ENCODE measurements at regions of chr5 and their contacts with region 1.

Region 1: GRCh38 chr5:368183-369084 is 46.9 kb downstream of the AHRR start:
- DNase-seq: peak; percentile 73
- ATAC-seq: peak; percentile 65
- H3K4me3 ChIP-seq: peak overlapping the region; percentile 7; the same call in 1 of the 2 replicates
- H3K27ac ChIP-seq: peak overlapping the region; percentile 98
- H3K4me1 ChIP-seq: peaks cover 63% of the 10 kb centered on the region
- H3K27me3 ChIP-seq: no peaks in the 10 kb centered on the region
- CTCF ChIP-seq: no peak
- EP300 ChIP-seq: peak; percentile 96 to 97
- POLR2A ChIP-seq: no peak; the same call in 1 of the 2 replicates
- RAD21 ChIP-seq: no peak; the same call in 1 of the 2 replicates

Region 2: DNA sequence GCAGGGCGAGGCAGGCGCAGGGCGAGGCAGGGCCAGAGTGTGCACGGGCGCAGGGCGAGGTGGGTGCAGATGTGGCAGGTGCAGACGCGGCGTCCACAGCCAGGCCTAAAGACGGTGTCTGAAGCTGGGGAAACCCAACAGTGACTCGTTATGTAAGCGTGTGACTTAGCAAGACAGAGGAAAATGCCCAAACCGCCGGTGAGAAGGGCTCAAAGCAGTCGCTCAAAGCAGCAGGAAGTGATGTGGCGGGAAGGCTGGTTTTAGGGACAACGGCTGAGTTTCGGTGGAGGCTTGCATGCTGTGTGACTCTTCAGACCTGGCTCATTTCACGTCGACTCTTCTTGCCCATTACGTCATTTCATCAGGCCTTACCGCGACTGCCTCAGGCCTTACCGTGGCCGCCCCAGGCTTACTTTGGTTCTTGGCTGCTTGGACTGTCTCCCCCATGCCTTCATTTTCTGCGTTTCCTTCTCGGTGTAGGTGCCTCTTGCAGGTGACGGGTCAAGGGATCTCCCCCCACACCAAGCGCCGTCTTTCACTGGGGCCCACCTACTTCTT is 24.1 kb after region 1 on chr5:
- CTCF ChIA-PET with region 1: no interaction called
- POLR2A ChIA-PET with region 1: interaction called, 9 read pairs
- RAD21 ChIA-PET with region 1: interaction called, 9 read pairs
- SMC1A ChIA-PET with region 1: interaction called, 10 read pairs
- in situ Hi-C with region 1: no loop called
- intact Hi-C with region 1: loop called (anchors 1 kb)
- DNase-seq: peak; percentile 95
- ATAC-seq: peak; percentile 95
- H3K4me3 ChIP-seq: peak overlapping the region; percentile 17; the same call in 1 of the 2 replicates
- H3K27ac ChIP-seq: peak overlapping the region; percentile 93
- H3K4me1 ChIP-seq: peaks cover 21% of the 10 kb centered on the region
- H3K27me3 ChIP-seq: no peaks in the 10 kb centered on the region
- CTCF ChIP-seq: no peak
- EP300 ChIP-seq: peak; percentile 81 to 82; a peak in 3 of 4 replicates
- POLR2A ChIP-seq: no peak; the same call in 1 of the 2 replicates
- RAD21 ChIP-seq: peak; percentile 4; the same call in 1 of the 2 replicates

Region 3: DNA sequence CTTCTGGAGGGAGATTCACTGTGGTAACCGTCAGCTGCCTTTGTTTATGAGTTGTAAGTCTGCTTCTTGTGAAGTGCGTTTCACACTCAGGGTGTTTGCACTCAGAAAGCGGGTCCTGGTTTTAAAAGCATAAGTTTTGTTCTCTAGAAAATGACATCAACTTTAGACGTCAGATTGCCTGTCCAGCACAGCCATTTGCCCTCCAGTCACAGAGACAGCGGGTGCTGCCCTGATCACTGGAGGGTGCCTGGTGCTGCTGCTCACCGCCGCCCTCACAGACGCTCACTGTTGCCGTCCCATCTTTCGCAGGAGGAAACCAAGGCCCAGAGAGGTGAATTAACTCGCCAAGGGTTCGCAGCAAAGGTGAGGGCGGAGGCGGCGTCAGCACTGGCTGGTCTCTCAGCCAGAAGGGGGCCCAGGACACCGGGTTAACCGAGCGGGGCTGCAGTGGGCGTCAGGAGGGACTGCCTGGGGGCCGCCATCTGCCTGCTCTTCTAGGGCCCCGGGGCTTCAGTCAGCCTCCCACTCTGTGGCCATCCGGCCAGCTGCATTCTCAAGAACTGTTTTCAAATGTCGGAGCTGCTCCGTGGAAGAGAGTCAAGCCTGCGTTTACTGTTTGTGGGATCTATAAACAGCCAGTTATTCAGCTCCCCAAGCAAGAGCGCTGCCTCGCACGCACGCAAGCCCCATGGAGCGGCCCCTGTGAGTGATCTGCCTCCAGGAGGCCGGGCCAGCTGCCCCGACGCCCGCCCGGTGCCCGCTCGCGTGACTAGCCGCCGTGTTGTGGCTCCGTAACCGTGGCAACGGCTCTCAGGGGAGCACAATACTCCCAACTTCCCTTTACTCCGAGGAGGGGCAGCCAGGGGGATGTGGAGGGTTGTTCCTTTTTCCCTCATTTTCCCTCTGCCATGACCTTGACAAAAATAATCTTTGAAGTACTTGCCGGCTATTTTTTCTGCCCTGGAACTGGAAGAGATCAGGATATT is 31.2 kb after region 1 on chr5:
- CTCF ChIA-PET with region 1: interaction called, 3 read pairs
- POLR2A ChIA-PET with region 1: interaction called, 7 read pairs
- RAD21 ChIA-PET with region 1: interaction called, 8 read pairs
- SMC1A ChIA-PET with region 1: interaction called, 7 read pairs
- in situ Hi-C with region 1: no loop called
- intact Hi-C with region 1: loop called (anchors 2 kb)
- DNase-seq: peak; percentile 49
- ATAC-seq: peak; percentile 87
- H3K4me3 ChIP-seq: no peak overlapping the region
- H3K27ac ChIP-seq: peak overlapping the region; percentile 95
- H3K4me1 ChIP-seq: peaks cover 56% of the 10 kb centered on the region
- H3K27me3 ChIP-seq: no peaks in the 10 kb centered on the region
- CTCF ChIP-seq: no peak
- EP300 ChIP-seq: peak; percentile 88 to 99; a peak in 3 of 4 replicates
- POLR2A ChIP-seq: peak; percentile 63
- RAD21 ChIP-seq: no peak

Region 4: GRCh38 chr5:424301-425110 is 56.1 kb after region 1 on chr5:
- CTCF ChIA-PET with region 1: interaction called, 15 read pairs
- POLR2A ChIA-PET with region 1: interaction called, 9 read pairs
- RAD21 ChIA-PET with region 1: interaction called, 13 read pairs
- SMC1A ChIA-PET with region 1: interaction called, 7 read pairs
- in situ Hi-C with region 1: no loop called
- intact Hi-C with region 1: loop called (anchors 2 kb)
- DNase-seq: peak; percentile 82
- ATAC-seq: peak; percentile 93
- H3K4me3 ChIP-seq: no peak overlapping the region
- H3K27ac ChIP-seq: peak overlapping the region; percentile 99
- H3K4me1 ChIP-seq: peaks cover 22% of the 10 kb centered on the region
- H3K27me3 ChIP-seq: no peaks in the 10 kb centered on the region
- CTCF ChIP-seq: no peak
- EP300 ChIP-seq: peak; percentile 51 to 64; a peak in 2 of 4 replicates
- POLR2A ChIP-seq: peak; percentile 63; the same call in 1 of the 2 replicates
- RAD21 ChIP-seq: no peak

Region 5: GRCh38 chr5:493119-493701 is 124.8 kb after region 1 on chr5:
- CTCF ChIA-PET with region 1: no interaction called
- POLR2A ChIA-PET with region 1: no interaction called
- RAD21 ChIA-PET with region 1: no interaction called
- SMC1A ChIA-PET with region 1: no interaction called
- in situ Hi-C with region 1: no loop called
- intact Hi-C with region 1: no loop called
- DNase-seq: no peak
- ATAC-seq: no peak; the same call in 2 of the 3 replicates
- H3K4me3 ChIP-seq: no peak overlapping the region
- H3K27ac ChIP-seq: no peak overlapping the region
- H3K4me1 ChIP-seq: no peaks in the 10 kb centered on the region
- H3K27me3 ChIP-seq: no peaks in the 10 kb centered on the region
- CTCF ChIP-seq: no peak
- EP300 ChIP-seq: no peak
- POLR2A ChIP-seq: no peak
- RAD21 ChIP-seq: no peak

Region 6: GRCh38 chr5:821504-821903 is 453.1 kb after region 1 on chr5:
- CTCF ChIA-PET with region 1: no interaction called
- POLR2A ChIA-PET with region 1: no interaction called
- RAD21 ChIA-PET with region 1: no interaction called
- SMC1A ChIA-PET with region 1: no interaction called
- in situ Hi-C with region 1: no loop called
- intact Hi-C with region 1: no loop called
- DNase-seq: no peak
- ATAC-seq: no peak
- H3K4me3 ChIP-seq: no peak overlapping the region
- H3K27ac ChIP-seq: no peak overlapping the region
- H3K4me1 ChIP-seq: no peaks in the 10 kb centered on the region
- H3K27me3 ChIP-seq: no peaks in the 10 kb centered on the region
- CTCF ChIP-seq: no peak
- EP300 ChIP-seq: no peak
- POLR2A ChIP-seq: no peak
- RAD21 ChIP-seq: no peak

Measured in GM12878 (cell line).